ENCODE measurements at regions of chr6 and their contacts with region 1.

Region 1: DNA sequence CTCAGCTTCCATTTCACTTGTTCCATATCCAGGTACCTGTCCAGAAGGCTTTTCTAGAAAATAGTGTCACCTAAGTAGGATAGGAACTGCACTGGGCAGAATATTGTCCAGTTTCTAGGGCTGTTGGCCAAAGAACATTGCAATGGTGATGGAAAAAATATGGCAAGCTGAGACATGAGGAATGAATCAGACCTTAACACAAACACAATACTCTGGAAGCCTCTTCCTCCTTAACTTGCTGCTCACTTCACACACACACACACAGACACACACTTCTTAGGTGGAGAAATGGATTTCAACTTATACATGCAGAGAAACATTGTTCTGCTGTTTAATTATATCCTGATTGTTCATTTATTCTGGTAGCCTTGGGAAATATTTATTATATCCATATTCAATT is 203.0 kb upstream of the RGS17 start:
- DNase-seq: no peak

Region 2: GRCh38 chr6:154320181-154320580 is 986.1 kb after region 1 on chr6:
- intact Hi-C with region 1: loop called in 1 of 2 experiments (anchors 5 kb)
- DNase-seq: no peak